ENCODE measurements at regions of chr3 and their contacts with region 1.

Region 1: GRCh38 chr3:112407888-112408702 is 75.1 kb downstream of the CD200 start:
- DNase-seq: no peak
- H3K4me3 ChIP-seq: no peak overlapping the region
- H3K27ac ChIP-seq: peak overlapping the region; percentile 72 to 75
- H3K4me1 ChIP-seq: peaks cover 4 to 24% of the 10 kb centered on the region in 2 donors
- H3K27me3 ChIP-seq: no peaks in the 10 kb centered on the region
- CTCF ChIP-seq: no peak

Region 2: GRCh38 chr3:112364291-112364690 is 43.8 kb before region 1 on chr3:
- intact Hi-C with region 1: loop called (anchors 5 kb)
- DNase-seq: no peak
- H3K4me3 ChIP-seq: no peak overlapping the region
- H3K27ac ChIP-seq: peak overlapping the region; percentile 84 to 89
- H3K4me1 ChIP-seq: peaks cover 8 to 45% of the 10 kb centered on the region in 2 donors
- H3K27me3 ChIP-seq: no peaks in the 10 kb centered on the region
- CTCF ChIP-seq: no peak

Region 3: GRCh38 chr3:112531358-112531781 is 123.3 kb after region 1 on chr3:
- intact Hi-C with region 1: no loop called
- DNase-seq: no peak
- H3K4me3 ChIP-seq: no peak overlapping the region
- H3K27ac ChIP-seq: no peak overlapping the region
- H3K4me1 ChIP-seq: no peaks in the 10 kb centered on the region
- H3K27me3 ChIP-seq: no peaks in the 10 kb centered on the region
- CTCF ChIP-seq: peak; percentile 28 to 45 (median 37)

Region 4: DNA sequence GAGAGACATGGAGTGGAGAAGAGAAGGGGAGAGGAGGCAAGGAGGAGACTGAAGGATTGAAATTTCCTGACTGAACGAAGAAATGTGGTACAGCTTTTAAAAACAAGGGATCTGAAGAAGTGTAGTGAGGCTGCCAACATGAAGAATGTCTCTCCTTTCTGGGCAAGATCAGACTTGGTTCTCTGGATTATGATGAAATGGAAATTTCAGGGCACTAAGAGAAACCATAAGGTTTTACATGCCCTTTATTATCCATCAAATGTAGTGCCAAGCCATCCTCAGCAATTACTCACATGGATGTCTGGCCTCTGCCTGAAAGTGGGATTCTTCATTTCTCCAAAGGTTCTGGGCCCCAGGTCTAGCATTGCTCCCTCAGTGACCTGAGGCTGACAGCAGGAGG is 310.4 kb after region 1 on chr3:
- intact Hi-C with region 1: no loop called
- DNase-seq: no peak
- H3K4me3 ChIP-seq: no peak overlapping the region
- H3K27ac ChIP-seq: no peak overlapping the region
- H3K4me1 ChIP-seq: no peaks in the 10 kb centered on the region
- H3K27me3 ChIP-seq: no peaks in the 10 kb centered on the region
- CTCF ChIP-seq: no peak

Measured in ascending aorta (tissue), 2 donors.